ENCODE measurements at regions of chr11 and their contacts with region 1.

Region 1: GRCh38 chr11:13343931-13344717 is 66.5 kb downstream of the BMAL1 start:
- DNase-seq: peak; percentile 72 to 88 (median 81)
- H3K4me3 ChIP-seq: no peak overlapping the region
- H3K27ac ChIP-seq: no peak overlapping the region
- H3K4me1 ChIP-seq: peaks cover 1 to 29% (median 22%) of the 10 kb centered on the region in 4 experiments
- H3K27me3 ChIP-seq: no peaks in the 10 kb centered on the region

Region 2: DNA sequence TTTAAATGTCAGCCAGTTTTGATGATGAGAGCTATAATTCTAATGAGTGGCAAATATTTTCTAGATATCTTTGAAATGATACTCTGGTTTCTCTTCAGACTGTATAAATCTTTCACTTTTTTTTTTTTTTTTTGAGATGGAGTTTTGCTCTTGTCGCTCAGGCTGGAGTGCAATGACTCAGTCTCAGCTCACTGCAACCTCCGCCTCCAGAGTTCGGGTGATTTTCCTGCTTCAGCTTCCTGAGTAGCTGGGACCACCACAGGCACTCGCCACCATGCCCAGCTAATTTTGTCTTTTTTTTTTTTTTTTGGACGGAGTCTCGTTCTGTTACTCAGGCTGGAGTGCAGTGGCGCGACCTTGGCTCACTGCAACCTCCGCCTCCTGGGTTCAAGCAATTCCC is 556.3 kb before region 1 on chr11:
- CTCF ChIA-PET with region 1: no interaction called
- POLR2A ChIA-PET with region 1: no interaction called
- DNase-seq: no peak
- H3K4me3 ChIP-seq: no peak overlapping the region
- H3K27ac ChIP-seq: no peak overlapping the region
- H3K4me1 ChIP-seq: no peaks in the 10 kb centered on the region
- H3K27me3 ChIP-seq: peaks cover 0 to 38% (median 9%) of the 10 kb centered on the region in 5 experiments

Region 3: DNA sequence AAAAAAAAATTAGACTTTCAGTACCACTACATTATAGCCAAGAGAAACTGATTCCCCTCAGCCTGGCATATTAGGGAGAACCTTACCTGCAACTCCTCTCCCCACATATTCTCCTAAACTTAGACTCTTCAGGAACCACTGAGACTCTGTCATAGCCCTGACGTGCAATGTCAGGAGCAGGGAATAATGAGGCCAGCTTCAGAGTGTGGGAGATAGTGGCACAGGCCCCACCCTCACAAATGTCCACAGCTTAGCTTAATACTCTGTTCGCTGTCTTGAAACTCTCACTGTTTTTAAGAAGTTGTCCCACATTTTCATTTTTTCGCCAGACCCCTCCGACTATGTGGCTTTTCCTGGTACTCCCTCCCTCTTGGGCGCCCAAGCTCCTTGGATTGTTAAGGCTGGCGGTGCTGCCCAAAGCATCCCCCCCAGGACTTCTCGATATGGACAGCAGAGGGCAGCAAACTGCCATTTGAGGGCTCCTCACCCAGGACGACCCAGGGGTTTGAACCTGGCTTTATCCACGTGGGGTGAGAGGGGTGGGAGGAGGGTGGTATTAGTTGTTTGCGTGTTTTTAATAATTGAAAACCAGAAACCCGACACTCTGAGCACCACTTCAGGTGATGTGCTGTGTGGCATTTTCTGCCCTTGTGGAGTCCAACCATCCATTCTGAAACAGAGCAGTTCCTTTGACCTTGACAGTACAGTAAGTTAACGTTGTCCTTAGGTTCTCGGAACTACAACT is 380.2 kb before region 1 on chr11:
- CTCF ChIA-PET with region 1: interaction called, 10 read pairs
- POLR2A ChIA-PET with region 1: no interaction called
- DNase-seq: peak; percentile 50 to 74 (median 62)
- H3K4me3 ChIP-seq: no peak overlapping the region
- H3K27ac ChIP-seq: no peak overlapping the region
- H3K4me1 ChIP-seq: no peaks in the 10 kb centered on the region
- H3K27me3 ChIP-seq: peaks cover 0 to 3% (median 0%) of the 10 kb centered on the region in 5 experiments

Region 4: DNA sequence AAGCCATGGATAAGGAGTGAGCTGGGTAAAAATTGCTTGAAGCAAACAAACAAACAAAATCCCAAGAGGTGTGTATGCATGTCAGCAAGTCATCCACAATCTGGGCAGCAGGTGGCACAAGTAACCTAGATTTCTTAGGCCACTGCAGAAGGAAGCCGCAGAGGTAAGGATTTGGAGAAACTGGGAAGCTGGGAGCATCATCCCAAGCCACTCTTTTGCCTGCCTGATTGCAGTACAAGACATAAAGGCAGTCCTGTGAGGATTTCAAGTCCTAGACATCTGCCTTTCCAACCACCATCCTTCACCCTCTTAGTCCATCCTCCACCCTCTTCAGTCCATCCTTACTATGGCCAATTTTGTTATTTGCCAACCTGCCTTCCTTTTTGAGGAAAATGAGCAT is 133.7 kb before region 1 on chr11:
- CTCF ChIA-PET with region 1: interaction called, 16 read pairs
- POLR2A ChIA-PET with region 1: no interaction called
- DNase-seq: peak; percentile 34 to 66 (median 60)
- H3K4me3 ChIP-seq: no peak overlapping the region
- H3K27ac ChIP-seq: no peak overlapping the region
- H3K4me1 ChIP-seq: peaks cover 0 to 19% (median 13%) of the 10 kb centered on the region in 4 experiments
- H3K27me3 ChIP-seq: no peaks in the 10 kb centered on the region

Region 5: DNA sequence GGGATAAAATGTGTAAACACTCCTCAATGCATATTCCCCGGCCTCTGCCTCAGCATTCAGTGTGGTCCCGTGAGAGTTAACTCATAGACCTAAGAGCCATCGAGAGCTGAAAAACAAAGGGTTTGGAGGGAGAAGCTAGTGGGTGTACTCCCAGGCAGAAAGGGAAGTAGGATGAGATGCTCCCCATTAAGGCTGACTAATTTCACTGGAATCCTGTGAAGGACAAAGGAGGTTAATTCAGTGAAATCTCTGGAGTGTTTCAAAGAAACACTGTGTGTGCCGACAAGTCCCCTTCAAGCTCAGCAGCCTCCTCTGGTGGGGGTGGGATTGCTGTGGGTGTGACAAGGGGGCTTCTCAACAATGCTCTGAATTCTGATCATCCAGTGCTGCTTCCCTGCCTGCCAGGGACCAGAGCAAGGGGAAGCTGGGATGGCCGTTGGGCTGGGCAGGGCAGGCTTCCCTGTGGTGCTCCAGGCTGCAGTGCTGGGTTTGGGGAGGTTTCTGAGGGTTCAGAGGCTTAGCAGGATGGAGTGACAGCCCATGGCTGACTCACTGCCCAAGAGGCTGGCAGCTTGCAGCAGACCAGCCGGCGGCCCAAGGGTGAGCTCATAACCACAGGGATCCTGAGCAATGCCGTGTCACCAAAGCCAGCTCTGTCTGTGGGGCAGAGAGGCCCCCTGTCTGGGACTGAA is 128.0 kb before region 1 on chr11:
- CTCF ChIA-PET with region 1: interaction called, 16 read pairs
- POLR2A ChIA-PET with region 1: no interaction called
- DNase-seq: peak; percentile 19 to 77 (median 66)
- H3K4me3 ChIP-seq: no peak overlapping the region
- H3K27ac ChIP-seq: no peak overlapping the region
- H3K4me1 ChIP-seq: peaks cover 0 to 5% (median 4%) of the 10 kb centered on the region in 4 experiments
- H3K27me3 ChIP-seq: peaks cover 0 to 4% (median 0%) of the 10 kb centered on the region in 5 experiments

Region 6: DNA sequence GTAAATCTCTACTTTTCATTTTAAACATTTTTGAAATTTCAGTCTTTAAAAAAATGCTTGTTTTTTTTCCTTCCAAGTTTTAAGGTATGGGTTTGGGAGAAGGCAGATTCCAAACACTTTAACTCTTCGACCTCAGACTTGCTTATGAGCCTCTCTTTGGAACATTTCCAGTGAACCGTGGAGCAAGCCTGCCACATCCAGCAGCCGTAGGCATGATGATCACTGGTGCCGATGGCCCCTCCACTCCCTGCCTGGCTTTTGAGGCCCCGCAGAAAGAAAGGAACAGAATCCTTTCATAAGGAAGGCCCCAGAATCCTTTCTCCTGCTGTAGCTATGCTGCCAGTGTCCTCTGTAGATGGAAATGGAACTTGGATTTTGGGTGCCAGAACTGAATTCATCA is 15.8 kb before region 1 on chr11:
- CTCF ChIA-PET with region 1: interaction called, 11 read pairs
- POLR2A ChIA-PET with region 1: no interaction called
- DNase-seq: no peak
- H3K4me3 ChIP-seq: no peak overlapping the region
- H3K27ac ChIP-seq: no peak overlapping the region
- H3K4me1 ChIP-seq: peaks cover 0 to 3% (median 3%) of the 10 kb centered on the region in 4 experiments
- H3K27me3 ChIP-seq: no peaks in the 10 kb centered on the region

Region 7: DNA sequence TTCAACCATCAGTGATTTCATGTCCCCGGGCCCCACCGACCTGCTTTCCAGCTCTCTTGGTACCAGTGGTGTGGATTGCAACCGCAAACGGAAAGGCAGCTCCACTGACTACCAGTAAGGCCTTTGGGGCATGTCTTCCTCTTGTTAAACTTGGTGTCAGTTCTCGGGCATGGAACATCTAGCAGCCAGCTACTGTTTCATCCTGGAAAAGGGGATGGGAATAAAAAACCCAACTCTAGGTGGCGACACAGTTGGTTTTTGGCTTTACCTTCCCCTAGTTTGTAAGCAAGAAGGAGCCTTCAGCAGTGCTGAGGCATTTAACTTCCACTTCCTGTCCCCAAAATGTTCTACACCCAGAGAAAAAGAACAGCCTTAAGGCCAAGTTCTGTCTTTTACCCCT is 10.2 kb after region 1 on chr11:
- CTCF ChIA-PET with region 1: interaction called, 22 read pairs
- POLR2A ChIA-PET with region 1: no interaction called
- DNase-seq: peak in 1 of 3 donors; percentile 6
- H3K4me3 ChIP-seq: no peak overlapping the region
- H3K27ac ChIP-seq: no peak overlapping the region
- H3K4me1 ChIP-seq: no peaks in the 10 kb centered on the region
- H3K27me3 ChIP-seq: no peaks in the 10 kb centered on the region

Measured in common myeloid progenitor, CD34-positive (primary cell).